Astrocyte of the spinal cord (primary cell): ENCODE measurements at regions of chr3 and their contacts with region 1.

Region 1: GRCh38 chr3:45507820-45508317 is 86.7 kb upstream of the LIMD1 start:
- DNase-seq: peak; percentile 85
- H3K4me3 ChIP-seq: no peak overlapping the region
- CTCF ChIP-seq: peak; percentile 73

Region 2: DNA sequence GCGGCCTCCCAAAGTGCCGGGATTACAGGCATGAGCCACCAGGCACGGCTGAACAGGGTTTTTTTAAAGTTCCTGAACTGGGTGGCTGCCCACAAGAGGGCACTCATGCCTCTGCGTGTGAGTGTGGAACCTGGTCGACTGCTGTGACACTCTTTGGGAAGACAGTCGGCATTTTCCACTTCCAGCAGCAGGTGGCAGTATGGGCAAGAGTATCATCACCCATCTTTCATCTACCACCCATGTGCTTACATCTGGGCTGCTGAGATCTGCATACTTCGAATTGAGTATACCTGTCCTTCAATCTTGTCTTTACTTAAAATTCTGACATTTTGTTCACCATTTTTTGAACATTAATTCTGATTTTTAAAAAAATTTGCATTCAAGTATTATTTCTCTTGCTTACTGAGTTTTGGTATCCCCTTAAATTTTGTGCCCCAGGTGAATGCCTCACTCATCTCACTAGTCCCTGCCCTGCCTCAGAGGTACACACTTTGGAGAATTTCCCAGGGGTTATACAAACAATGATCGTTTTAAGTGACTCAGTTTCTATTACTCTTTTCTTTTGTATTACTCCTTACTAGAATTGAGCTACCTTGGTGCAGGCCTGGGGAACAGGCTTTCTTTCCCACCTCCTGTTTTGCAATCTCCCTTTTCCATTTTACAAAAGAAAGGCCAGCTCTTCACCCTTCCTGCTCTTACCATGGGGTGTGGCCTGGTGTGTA is 470.0 kb before region 1 on chr3:
- in situ Hi-C with region 1: loop called (anchors 25 kb)
- DNase-seq: peak; percentile 91
- H3K4me3 ChIP-seq: no peak overlapping the region
- CTCF ChIP-seq: peak; percentile 85

Region 3: GRCh38 chr3:45656575-45657363 is 148.9 kb after region 1 on chr3:
- in situ Hi-C with region 1: loop called (anchors 25 kb)
- DNase-seq: peak; percentile 94
- H3K4me3 ChIP-seq: no peak overlapping the region
- CTCF ChIP-seq: peak; percentile 92